Activated CD4-positive, alpha-beta T cell treated with anti-CD3 and anti-CD28 coated beads for 36 hours (primary cell): ENCODE measurements at regions of chr2 and their contacts with region 1.

Region 1: GRCh38 chr2:27902098-27902497 is 11.6 kb downstream of the BABAM2 start:
- DNase-seq: no peak
- ATAC-seq: peak; percentile 86
- H3K4me3 Mint-ChIP-seq: no peak overlapping the region
- H3K27ac Mint-ChIP-seq: peak overlapping the region; percentile 79
- H3K4me1 Mint-ChIP-seq: peaks cover 79% of the 10 kb centered on the region
- H3K27me3 Mint-ChIP-seq: no peaks in the 10 kb centered on the region

Region 2: GRCh38 chr2:27831279-27832050 is 70.6 kb before region 1 on chr2:
- CTCF ChIA-PET with region 1: no interaction called
- POLR2A ChIA-PET with region 1: no interaction called
- intact Hi-C with region 1: no loop called
- DNase-seq: no peak
- ATAC-seq: no peak
- H3K4me3 Mint-ChIP-seq: no peak overlapping the region
- H3K27ac Mint-ChIP-seq: no peak overlapping the region
- H3K4me1 Mint-ChIP-seq: no peaks in the 10 kb centered on the region
- H3K27me3 Mint-ChIP-seq: no peaks in the 10 kb centered on the region

Region 3: DNA sequence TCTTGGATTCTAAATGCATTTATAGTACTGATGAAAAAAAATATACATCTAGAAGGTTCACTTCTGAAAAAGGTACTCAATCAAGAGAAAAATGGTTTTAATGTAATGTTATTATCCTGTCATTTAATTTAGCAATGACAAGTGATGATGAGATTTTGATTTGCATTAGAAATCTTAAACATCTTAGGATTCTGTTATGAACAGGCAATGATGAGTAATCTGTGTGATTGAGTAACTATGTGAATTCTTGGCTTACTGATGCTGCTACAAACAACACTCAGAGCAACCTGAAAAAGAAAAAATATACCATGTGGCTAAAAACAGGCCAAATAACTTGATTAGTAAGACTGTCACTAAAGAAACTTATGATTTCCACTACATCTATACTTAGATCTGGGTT is 42.0 kb before region 1 on chr2:
- CTCF ChIA-PET with region 1: no interaction called
- POLR2A ChIA-PET with region 1: no interaction called
- intact Hi-C with region 1: loop called in 1 of 2 experiments (anchors 1 kb)
- DNase-seq: no peak
- ATAC-seq: peak; percentile 76
- H3K4me3 Mint-ChIP-seq: no peak overlapping the region
- H3K27ac Mint-ChIP-seq: peak overlapping the region; percentile 13
- H3K4me1 Mint-ChIP-seq: peaks cover 42% of the 10 kb centered on the region
- H3K27me3 Mint-ChIP-seq: no peaks in the 10 kb centered on the region

Region 4: DNA sequence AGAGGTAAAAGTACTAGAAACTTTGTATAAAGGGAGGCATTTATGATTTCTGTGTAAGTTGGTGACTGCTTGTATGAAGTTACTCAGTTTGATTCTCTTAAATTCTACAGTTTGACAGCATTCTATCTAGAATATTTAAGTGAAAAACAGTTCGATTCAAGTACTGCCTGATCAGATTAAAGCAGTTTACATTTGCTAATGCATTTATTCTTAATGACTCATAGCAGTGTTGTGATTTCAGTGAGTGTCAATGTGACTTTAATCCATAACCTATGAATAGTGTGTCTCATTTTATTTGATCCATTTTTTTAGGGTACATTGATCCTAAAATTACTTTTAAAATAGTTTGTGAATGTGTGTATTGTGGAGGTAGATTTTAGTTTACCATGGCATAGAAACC is 1028.1 kb after region 1 on chr2:
- CTCF ChIA-PET with region 1: no interaction called
- POLR2A ChIA-PET with region 1: no interaction called
- intact Hi-C with region 1: no loop called
- DNase-seq: no peak
- ATAC-seq: no peak
- H3K4me3 Mint-ChIP-seq: no peak overlapping the region
- H3K27ac Mint-ChIP-seq: no peak overlapping the region
- H3K4me1 Mint-ChIP-seq: no peaks in the 10 kb centered on the region
- H3K27me3 Mint-ChIP-seq: no peaks in the 10 kb centered on the region